ENCODE measurements at regions of chr16 and their contacts with region 1.

Region 1: DNA sequence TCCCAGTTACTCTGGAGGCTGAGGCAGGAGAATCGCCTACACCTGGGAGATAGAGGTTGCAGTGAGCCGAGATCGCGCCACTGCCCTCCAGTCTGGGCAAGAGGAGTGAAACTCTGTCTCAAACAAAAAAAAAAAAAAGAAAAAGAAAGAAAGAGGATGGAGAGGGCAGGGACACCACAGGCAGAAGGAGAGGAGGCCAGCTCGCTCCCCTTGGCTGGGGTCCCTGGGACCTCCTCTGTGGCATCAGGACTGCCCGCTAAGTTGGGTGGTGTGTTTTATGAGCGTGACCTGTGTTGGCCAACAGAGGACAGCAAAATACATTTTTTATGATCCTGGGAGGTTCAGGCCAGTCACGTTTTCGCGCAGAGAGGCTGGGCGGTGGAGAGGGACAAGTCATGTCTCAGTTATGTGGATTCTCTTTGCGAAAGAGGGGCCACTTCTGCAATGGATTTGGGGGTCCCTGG is 229.6 kb downstream of the MRTFB start:
- DNase-seq: no peak
- H3K4me3 ChIP-seq: peak overlapping the region in 1 of 4 experiments; percentile 70; a peak in 2 of 8 replicates
- H3K27ac ChIP-seq: no peak overlapping the region
- H3K4me1 ChIP-seq: peaks cover 2 to 13% (median 8%) of the 10 kb centered on the region in 4 experiments; a peak in 5 of 7 replicates
- H3K27me3 ChIP-seq: peaks cover 0 to 5% (median 0%) of the 10 kb centered on the region in 4 experiments; a peak in 2 of 7 replicates
- CTCF ChIP-seq: peak; percentile 31 to 53 (median 48)
- EP300 ChIP-seq: no peak
- POLR2A ChIP-seq: no peak
- RAD21 ChIP-seq: peak; percentile 64 to 72

Region 2: GRCh38 chr16:14097182-14097959 is 203.4 kb before region 1 on chr16:
- CTCF ChIA-PET with region 1: no interaction called
- POLR2A ChIA-PET with region 1: no interaction called
- DNase-seq: no peak
- H3K4me3 ChIP-seq: no peak overlapping the region
- H3K27ac ChIP-seq: no peak overlapping the region
- H3K4me1 ChIP-seq: peaks cover 0 to 2% (median under 1%) of the 10 kb centered on the region in 4 experiments; a peak in 3 of 7 replicates
- H3K27me3 ChIP-seq: peaks cover 0 to 1% (median 0%) of the 10 kb centered on the region in 4 experiments; a peak in 1 of 7 replicates
- CTCF ChIP-seq: no peak
- EP300 ChIP-seq: no peak
- POLR2A ChIP-seq: no peak
- RAD21 ChIP-seq: no peak

Region 3: DNA sequence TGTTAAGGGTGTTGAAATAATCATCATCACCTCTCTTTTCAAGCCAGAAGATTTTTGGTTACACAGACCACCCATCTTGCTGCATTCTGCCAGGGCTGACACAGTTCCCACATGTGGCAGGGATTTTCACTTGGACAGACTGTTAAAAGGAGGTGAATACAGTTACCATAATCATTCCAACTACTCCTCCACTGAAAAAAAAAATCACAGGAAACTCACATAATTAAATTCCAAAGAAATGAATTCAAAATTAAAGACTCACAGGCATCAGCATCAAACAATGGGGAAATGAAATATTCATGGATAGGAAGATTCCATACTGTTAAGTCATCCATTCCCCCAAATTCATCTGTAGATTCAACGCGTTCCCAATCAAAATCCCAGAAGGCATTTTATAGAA is 20.2 kb before region 1 on chr16:
- CTCF ChIA-PET with region 1: interaction called, 27 read pairs
- POLR2A ChIA-PET with region 1: interaction called, 9 read pairs
- DNase-seq: no peak
- H3K4me3 ChIP-seq: no peak overlapping the region
- H3K27ac ChIP-seq: no peak overlapping the region
- H3K4me1 ChIP-seq: peaks cover 2 to 21% (median 11%) of the 10 kb centered on the region in 4 experiments
- H3K27me3 ChIP-seq: no peaks in the 10 kb centered on the region
- CTCF ChIP-seq: no peak
- EP300 ChIP-seq: no peak
- POLR2A ChIP-seq: no peak
- RAD21 ChIP-seq: no peak

Region 4: GRCh38 chr16:14285513-14286385 is 15.0 kb before region 1 on chr16:
- CTCF ChIA-PET with region 1: interaction called, 27 read pairs
- POLR2A ChIA-PET with region 1: interaction called, 9 read pairs
- DNase-seq: peak; percentile 87 to 100
- H3K4me3 ChIP-seq: peak overlapping the region; percentile 65 to 92 (median 72)
- H3K27ac ChIP-seq: no peak overlapping the region
- H3K4me1 ChIP-seq: peaks cover 2 to 17% (median 11%) of the 10 kb centered on the region in 4 experiments
- H3K27me3 ChIP-seq: no peaks in the 10 kb centered on the region
- CTCF ChIP-seq: no peak
- EP300 ChIP-seq: no peak; a peak in 1 of 3 replicates
- POLR2A ChIP-seq: no peak
- RAD21 ChIP-seq: no peak

Region 5: GRCh38 chr16:14529010-14529669 is 228.4 kb after region 1 on chr16:
- CTCF ChIA-PET with region 1: interaction called, 15 read pairs
- POLR2A ChIA-PET with region 1: no interaction called
- DNase-seq: peak; percentile 64 to 69
- H3K4me3 ChIP-seq: peak overlapping the region in 1 of 4 experiments; percentile 21; a peak in 1 of 8 replicates
- H3K27ac ChIP-seq: no peak overlapping the region
- H3K4me1 ChIP-seq: peaks cover 5 to 15% (median 11%) of the 10 kb centered on the region in 4 experiments
- H3K27me3 ChIP-seq: no peaks in the 10 kb centered on the region
- CTCF ChIP-seq: peak in 2 of 3 experiments; percentile 79 to 85; a peak in 3 of 4 replicates
- EP300 ChIP-seq: no peak
- POLR2A ChIP-seq: no peak
- RAD21 ChIP-seq: peak; percentile 95 to 97